Sciatic nerve (tissue), 2 donors: ENCODE measurements at regions of chr3 and their contacts with region 1.

Region 1: DNA sequence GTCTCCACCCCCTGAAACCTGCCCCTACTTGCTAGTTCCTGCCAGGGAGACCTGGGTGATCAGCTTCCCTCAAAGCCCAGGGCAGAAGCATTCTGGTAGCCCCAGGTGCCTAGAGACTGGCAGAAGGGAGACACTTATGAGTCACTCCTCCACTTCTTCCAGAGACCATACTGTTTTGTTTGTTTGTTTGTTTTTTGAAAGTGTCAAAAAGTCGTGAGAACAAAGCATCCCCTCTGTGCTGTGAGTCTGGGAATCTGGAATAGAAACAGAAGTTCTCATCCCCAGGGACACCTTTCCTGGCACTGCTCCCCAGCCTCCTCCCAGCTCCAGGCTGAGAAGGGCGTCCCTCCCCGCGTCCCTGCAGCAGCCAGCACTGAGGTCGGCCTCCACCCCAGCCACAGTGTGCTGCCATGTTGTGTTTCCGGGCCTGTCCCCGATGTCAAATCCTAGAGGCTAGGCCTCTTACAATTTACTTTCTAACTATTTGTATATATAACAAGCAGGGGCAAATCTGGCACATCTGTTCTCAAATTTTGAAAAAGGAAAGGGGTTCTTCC is 573.0 kb downstream of the RBMS3 start:
- DNase-seq: no peak
- ATAC-seq: no peak

Region 2: DNA sequence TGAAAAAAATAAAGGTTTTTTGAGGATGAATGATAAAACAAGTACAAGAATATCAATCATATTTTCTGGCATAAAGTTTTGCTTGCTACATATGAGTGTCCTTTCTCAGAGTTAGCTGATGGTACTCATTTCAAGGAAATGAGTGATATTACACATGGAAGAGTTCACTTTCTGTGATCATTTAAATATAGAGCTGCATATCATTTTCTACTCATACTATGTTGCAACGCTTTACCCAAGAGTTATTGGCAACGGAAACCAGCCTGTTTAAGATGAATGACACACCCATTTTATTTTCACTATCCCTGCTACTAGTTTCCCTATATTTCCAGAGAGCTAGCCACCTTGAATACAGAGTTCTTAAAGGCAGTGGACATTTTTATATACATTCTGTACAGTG is 608.5 kb before region 1 on chr3:
- intact Hi-C with region 1: no loop called
- DNase-seq: no peak
- ATAC-seq: no peak

Region 3: DNA sequence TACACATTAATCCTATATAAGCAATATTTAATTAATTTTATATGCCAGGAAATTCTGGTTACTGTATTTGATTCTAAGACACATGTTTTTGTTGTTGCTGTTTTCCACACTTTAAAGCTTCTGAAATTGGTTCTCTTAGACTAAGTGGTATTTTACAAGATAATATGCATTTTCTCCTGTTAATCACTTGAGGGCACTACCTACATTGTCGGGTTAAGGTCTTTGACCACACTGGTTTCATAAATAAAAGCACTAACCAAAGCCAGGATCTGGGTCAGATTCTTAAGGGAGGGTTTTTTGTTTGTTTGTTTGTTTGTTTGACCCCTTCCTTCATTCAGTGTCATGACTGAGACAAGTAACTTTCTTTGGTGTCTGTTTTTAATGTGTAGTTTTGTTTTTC is 17.2 kb after region 1 on chr3:
- intact Hi-C with region 1: loop called (anchors 2 kb)
- DNase-seq: no peak
- ATAC-seq: no peak